CD4-positive, alpha-beta memory T cell (primary cell): ENCODE measurements at regions of chr12 and their contacts with region 1.

Region 1: GRCh38 chr12:49740930-49741881 is at the start of gene TMBIM6:
- DNase-seq: peak; percentile 98 to 100 (median 99)
- H3K4me3 ChIP-seq: peak within 1 kb of the TSS; percentile 27 to 86
- H3K4me3 Mint-ChIP-seq: peak within 1 kb of the TSS; percentile 92 to 97 (median 93)
- H3K27ac ChIP-seq: peak within 1 kb of the TSS; percentile 99
- H3K27ac Mint-ChIP-seq: peak within 1 kb of the TSS; percentile 95 to 100 (median 98)
- H3K4me1 ChIP-seq: peaks cover 45% of the 10 kb centered on the region
- H3K4me1 Mint-ChIP-seq: peaks cover 27 to 52% (median 38%) of the 10 kb centered on the region in 4 donors
- H3K27me3 ChIP-seq: no peaks in the 10 kb centered on the region
- H3K27me3 Mint-ChIP-seq: no peaks in the 10 kb centered on the region
- total RNA-seq, gene TMBIM6: 421 to 431 TPM

Region 2: DNA sequence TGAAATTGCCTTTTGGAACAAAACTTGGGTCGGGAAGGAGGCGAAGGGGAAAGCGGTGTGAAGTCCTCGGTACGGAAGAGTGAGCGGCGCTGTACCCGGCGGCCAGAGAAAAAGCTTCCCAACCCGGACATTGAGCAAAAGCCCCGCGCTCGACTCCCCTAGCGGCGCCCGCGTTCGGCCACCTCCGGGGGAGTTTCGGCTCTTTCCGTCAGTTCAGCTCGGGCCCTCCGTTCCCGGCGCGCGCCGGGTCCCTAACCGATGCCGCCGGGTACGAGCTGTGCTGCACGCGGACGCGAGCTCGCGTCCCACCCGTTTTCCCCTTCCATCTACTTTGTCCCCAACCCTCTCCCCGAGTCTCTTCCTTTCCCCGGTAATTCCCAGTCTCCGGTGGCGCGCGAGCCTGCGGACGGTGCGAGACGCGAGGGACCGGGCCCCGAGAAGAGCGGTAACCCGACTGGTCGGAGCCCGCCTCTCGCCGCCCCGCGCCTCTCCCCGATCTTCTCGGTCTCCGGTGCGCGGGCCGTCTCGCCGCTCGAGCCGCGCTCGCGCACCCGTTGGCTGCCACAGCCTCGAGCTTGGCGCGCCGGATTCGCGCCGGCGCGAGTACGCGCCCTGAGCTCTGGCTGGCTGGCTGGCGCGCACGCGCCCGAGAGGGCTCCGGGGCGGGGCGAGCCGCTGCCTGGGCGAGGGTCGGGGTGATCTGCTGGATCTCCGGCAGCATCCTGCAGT is 374.4 kb before region 1 on chr12:
- CTCF ChIA-PET with region 1: no interaction called
- POLR2A ChIA-PET with region 1: interaction called, 11 read pairs
- intact Hi-C with region 1: no loop called
- DNase-seq: peak; percentile 78 to 85 (median 83)
- H3K4me3 ChIP-seq: peak overlapping the region; percentile 55 to 88
- H3K4me3 Mint-ChIP-seq: peak overlapping the region; percentile 82 to 98 (median 96)
- H3K27ac ChIP-seq: peak overlapping the region; percentile 84
- H3K27ac Mint-ChIP-seq: peak overlapping the region; percentile 93 to 98 (median 96)
- H3K4me1 ChIP-seq: peaks cover 19% of the 10 kb centered on the region
- H3K4me1 Mint-ChIP-seq: peaks cover 17 to 37% (median 24%) of the 10 kb centered on the region in 4 donors
- H3K27me3 ChIP-seq: no peaks in the 10 kb centered on the region
- H3K27me3 Mint-ChIP-seq: peaks cover 0 to 1% of the 10 kb centered on the region in 2 donors

Region 3: DNA sequence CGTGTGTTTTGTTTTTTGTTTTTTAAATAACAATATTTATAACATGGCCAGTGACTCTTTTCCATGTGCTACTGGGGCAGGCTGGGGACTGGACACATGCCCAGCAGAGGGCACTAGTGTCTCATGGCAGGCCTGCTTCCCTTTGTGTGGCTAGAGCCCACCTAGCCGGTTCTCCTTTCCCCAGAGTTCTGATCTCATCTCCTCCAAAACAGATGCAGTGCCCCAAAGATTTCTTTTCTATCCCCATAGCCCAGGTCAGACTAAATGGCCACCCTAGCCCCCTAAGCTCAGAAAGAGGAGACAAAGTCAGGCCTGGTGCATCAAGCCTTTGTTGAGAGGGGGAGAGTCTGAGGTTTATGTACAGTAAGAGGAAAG is 96.6 kb before region 1 on chr12:
- CTCF ChIA-PET with region 1: interaction called, 9 read pairs
- POLR2A ChIA-PET with region 1: interaction called, 9 read pairs
- intact Hi-C with region 1: loop called (anchors 1 kb)
- DNase-seq: peak; percentile 79 to 85 (median 80)
- H3K4me3 ChIP-seq: no peak overlapping the region
- H3K4me3 Mint-ChIP-seq: peak overlapping the region in 3 of 8 donors; percentile 36 to 43 (median 37)
- H3K27ac ChIP-seq: peak overlapping the region; percentile 42
- H3K27ac Mint-ChIP-seq: peak overlapping the region; percentile 76 to 96 (median 93)
- H3K4me1 ChIP-seq: peaks cover 18% of the 10 kb centered on the region
- H3K4me1 Mint-ChIP-seq: peaks cover 13 to 35% (median 22%) of the 10 kb centered on the region in 4 donors
- H3K27me3 ChIP-seq: no peaks in the 10 kb centered on the region
- H3K27me3 Mint-ChIP-seq: no peaks in the 10 kb centered on the region

Region 4: GRCh38 chr12:49707128-49707811 is 33.9 kb before region 1 on chr12 and contains the start of gene FMNL3:
- CTCF ChIA-PET with region 1: interaction called, 7 read pairs
- POLR2A ChIA-PET with region 1: interaction called, 15 read pairs
- intact Hi-C with region 1: loop called (anchors 1 kb)
- DNase-seq: peak; percentile 97 to 99 (median 98)
- H3K4me3 ChIP-seq: peak within 1 kb of the TSS; percentile 66 to 71
- H3K4me3 Mint-ChIP-seq: peak within 1 kb of the TSS; percentile 90 to 95 (median 93)
- H3K27ac ChIP-seq: peak within 1 kb of the TSS; percentile 77
- H3K27ac Mint-ChIP-seq: peak within 1 kb of the TSS; percentile 87 to 95 (median 93)
- H3K4me1 ChIP-seq: peaks cover 40% of the 10 kb centered on the region
- H3K4me1 Mint-ChIP-seq: peaks cover 30 to 50% (median 39%) of the 10 kb centered on the region in 4 donors
- H3K27me3 ChIP-seq: no peaks in the 10 kb centered on the region
- H3K27me3 Mint-ChIP-seq: peaks cover 5 to 7% of the 10 kb centered on the region in 2 donors
- total RNA-seq, gene FMNL3: 27.9 to 28.1 TPM

Region 5: DNA sequence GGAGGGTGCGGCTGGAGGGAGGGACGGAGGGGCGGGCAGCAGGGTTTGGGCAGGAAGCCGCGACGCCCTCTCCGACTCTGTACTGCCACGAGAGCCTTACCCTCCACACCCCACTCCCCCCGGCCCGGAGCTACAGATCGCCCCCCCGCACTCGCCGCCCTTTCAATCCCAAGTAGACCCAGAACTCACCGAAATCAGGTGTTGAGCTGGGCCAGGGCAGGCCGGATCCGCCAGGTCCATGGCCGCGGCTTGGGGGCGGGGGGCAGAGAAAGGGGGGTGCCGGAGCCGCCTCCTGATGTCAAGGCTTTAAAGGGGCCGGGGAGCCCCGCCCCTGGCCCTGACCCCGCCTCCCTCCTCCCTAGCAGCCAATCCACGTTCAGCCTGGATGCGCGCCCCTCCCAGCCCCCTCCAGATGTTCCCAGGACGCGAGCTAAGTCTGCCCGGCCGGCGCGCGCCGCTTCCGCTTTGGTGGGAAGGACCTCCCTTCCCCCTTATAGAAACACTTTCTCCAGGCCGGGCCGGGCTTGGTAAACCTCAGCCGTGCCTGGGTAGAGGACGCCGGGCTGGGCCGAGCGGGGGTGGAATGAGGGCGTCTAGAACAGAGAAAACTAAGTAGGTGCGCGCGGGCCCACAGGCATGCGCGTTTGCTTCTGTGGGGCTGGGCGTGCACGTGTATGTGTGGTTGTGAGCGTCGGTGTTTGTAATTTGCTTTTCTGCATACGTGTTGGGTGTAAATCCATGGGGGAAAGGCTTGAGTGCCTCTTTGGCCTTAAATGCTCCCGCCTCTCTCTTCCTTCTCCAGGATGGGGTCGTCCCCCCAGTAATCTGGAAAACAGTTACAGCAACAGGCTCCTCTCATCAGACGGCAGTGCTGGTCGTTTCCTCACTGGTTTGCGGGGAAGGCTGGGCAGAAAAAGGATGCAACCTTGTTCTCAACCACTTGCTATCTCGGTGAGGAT is 87.2 kb after region 1 on chr12 and contains the start of gene NCKAP5L:
- CTCF ChIA-PET with region 1: interaction called, 7 read pairs
- POLR2A ChIA-PET with region 1: interaction called, 23 read pairs
- intact Hi-C with region 1: loop called (anchors 1 kb)
- DNase-seq: peak; percentile 91 to 96 (median 93)
- H3K4me3 ChIP-seq: peak within 1 kb of the TSS; percentile 70 to 79
- H3K4me3 Mint-ChIP-seq: peak within 1 kb of the TSS; percentile 91 to 99 (median 97)
- H3K27ac ChIP-seq: peak within 1 kb of the TSS; percentile 41
- H3K27ac Mint-ChIP-seq: peak within 1 kb of the TSS; percentile 84 to 98 (median 97)
- H3K4me1 ChIP-seq: peaks cover 24% of the 10 kb centered on the region
- H3K4me1 Mint-ChIP-seq: peaks cover 17 to 34% (median 24%) of the 10 kb centered on the region in 4 donors
- H3K27me3 ChIP-seq: no peaks in the 10 kb centered on the region
- H3K27me3 Mint-ChIP-seq: no peaks in the 10 kb centered on the region
- total RNA-seq, gene NCKAP5L: 10.4 to 11.2 TPM

Region 6: GRCh38 chr12:51083126-51083833 is 1342.1 kb after region 1 on chr12 and contains the start of gene CSRNP2:
- CTCF ChIA-PET with region 1: no interaction called
- POLR2A ChIA-PET with region 1: no interaction called
- intact Hi-C with region 1: loop called (anchors 5 kb)
- DNase-seq: peak; percentile 94 to 96 (median 95)
- H3K4me3 ChIP-seq: peak within 1 kb of the TSS; percentile 67 to 93
- H3K4me3 Mint-ChIP-seq: peak within 1 kb of the TSS; percentile 93 to 98 (median 96)
- H3K27ac ChIP-seq: peak within 1 kb of the TSS; percentile 86
- H3K27ac Mint-ChIP-seq: peak within 1 kb of the TSS; percentile 88 to 97 (median 95)
- H3K4me1 ChIP-seq: peaks cover 21% of the 10 kb centered on the region
- H3K4me1 Mint-ChIP-seq: peaks cover 28 to 45% (median 36%) of the 10 kb centered on the region in 4 donors
- H3K27me3 ChIP-seq: no peaks in the 10 kb centered on the region
- H3K27me3 Mint-ChIP-seq: no peaks in the 10 kb centered on the region
- total RNA-seq, gene CSRNP2: 34.1 to 35.0 TPM